ENCODE measurements at regions of chr1 and their contacts with region 1.

Region 1: GRCh38 chr1:5423109-5423508 is 569.1 kb downstream of the NPHP4 start:
- DNase-seq: peak in 4 of 5 donors; percentile 24 to 35 (median 31)
- H3K4me3 ChIP-seq: peak overlapping the region in 1 of 2 donors; percentile 41
- H3K4me3 Mint-ChIP-seq: peak overlapping the region in 7 of 8 donors; percentile 51 to 73 (median 66)
- H3K27ac ChIP-seq: no peak overlapping the region
- H3K27ac Mint-ChIP-seq: peak overlapping the region in 5 of 7 donors; percentile 42 to 79 (median 61)
- H3K4me1 ChIP-seq: peaks cover 29% of the 10 kb centered on the region
- H3K4me1 Mint-ChIP-seq: peaks cover 13 to 36% (median 26%) of the 10 kb centered on the region in 4 donors
- H3K27me3 ChIP-seq: no peaks in the 10 kb centered on the region
- H3K27me3 Mint-ChIP-seq: peaks cover 2 to 6% of the 10 kb centered on the region in 2 donors

Region 2: GRCh38 chr1:5329068-5329739 is 93.9 kb before region 1 on chr1:
- CTCF ChIA-PET with region 1: no interaction called
- POLR2A ChIA-PET with region 1: no interaction called
- intact Hi-C with region 1: loop called (anchors 2 kb)
- DNase-seq: peak in 4 of 5 donors; percentile 9 to 20 (median 16)
- H3K4me3 ChIP-seq: peak overlapping the region in 1 of 2 donors; percentile 12
- H3K4me3 Mint-ChIP-seq: peak overlapping the region; percentile 56 to 84 (median 69)
- H3K27ac ChIP-seq: peak overlapping the region; percentile 44
- H3K27ac Mint-ChIP-seq: peak overlapping the region; percentile 83 to 98 (median 95)
- H3K4me1 ChIP-seq: peaks cover 37% of the 10 kb centered on the region
- H3K4me1 Mint-ChIP-seq: peaks cover 31 to 68% (median 45%) of the 10 kb centered on the region in 4 donors
- H3K27me3 ChIP-seq: no peaks in the 10 kb centered on the region
- H3K27me3 Mint-ChIP-seq: peaks cover 0 to 2% of the 10 kb centered on the region in 2 donors

Region 3: DNA sequence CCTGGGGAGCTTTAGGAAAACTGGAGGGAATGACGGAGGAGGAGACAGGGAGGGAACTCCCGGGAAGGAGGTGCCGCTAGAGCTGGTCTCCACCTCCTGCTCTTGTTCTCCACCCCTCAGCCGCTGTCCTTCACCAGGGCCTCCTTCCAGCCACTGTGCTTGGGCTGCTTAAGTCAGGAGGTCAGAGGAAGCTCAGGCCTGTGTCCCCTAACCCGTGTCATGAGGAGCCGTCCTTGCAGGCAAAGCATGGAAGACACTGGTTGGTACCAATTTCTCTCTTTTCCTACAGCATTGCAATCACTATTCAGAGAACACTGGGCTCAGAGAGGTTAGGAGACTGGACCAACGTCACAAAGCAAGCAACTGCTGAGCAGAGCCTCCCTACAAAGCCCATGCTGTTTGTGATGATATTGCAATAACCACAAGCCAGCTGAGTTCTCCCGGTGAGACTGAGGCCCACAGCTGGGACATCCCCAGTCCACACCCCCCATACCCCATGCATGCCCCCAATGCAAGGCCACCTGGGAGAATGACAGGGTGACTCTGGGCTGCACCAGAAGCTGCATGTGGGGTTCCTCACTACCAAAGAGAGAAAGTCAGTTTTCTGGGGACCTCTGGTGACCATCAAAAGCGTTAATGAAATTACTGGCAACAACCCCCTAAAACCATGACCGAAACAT is 141.6 kb after region 1 on chr1:
- CTCF ChIA-PET with region 1: no interaction called
- POLR2A ChIA-PET with region 1: no interaction called
- intact Hi-C with region 1: no loop called
- DNase-seq: no peak
- H3K4me3 ChIP-seq: no peak overlapping the region
- H3K4me3 Mint-ChIP-seq: no peak overlapping the region
- H3K27ac ChIP-seq: no peak overlapping the region
- H3K27ac Mint-ChIP-seq: no peak overlapping the region
- H3K4me1 ChIP-seq: no peaks in the 10 kb centered on the region
- H3K4me1 Mint-ChIP-seq: no peaks in the 10 kb centered on the region
- H3K27me3 ChIP-seq: no peaks in the 10 kb centered on the region
- H3K27me3 Mint-ChIP-seq: no peaks in the 10 kb centered on the region